Sigmoid colon (tissue), 7 donors: ENCODE measurements at regions of chr1 and their contacts with region 1.

Region 1: GRCh38 chr1:165914136-165914798 is 86.9 kb downstream of the UCK2 start:
- DNase-seq: peak; percentile 69
- H3K4me3 ChIP-seq: no peak overlapping the region
- H3K27ac ChIP-seq: no peak overlapping the region
- H3K4me1 ChIP-seq: peaks cover 0 to 6% (median 0%) of the 10 kb centered on the region in 4 donors
- H3K27me3 ChIP-seq: no peaks in the 10 kb centered on the region
- CTCF ChIP-seq: peak; percentile 78 to 89 (median 88)
- EP300 ChIP-seq: no peak
- POLR2A ChIP-seq: no peak

Region 2: GRCh38 chr1:165392634-165393571 is 521.4 kb before region 1 on chr1:
- intact Hi-C with region 1: loop called (anchors 5 kb)
- DNase-seq: peak; percentile 92
- H3K4me3 ChIP-seq: peak overlapping the region in 3 of 4 donors; percentile 5 to 24 (median 23)
- H3K27ac ChIP-seq: peak overlapping the region in 1 of 4 donors; percentile 47
- H3K4me1 ChIP-seq: peaks cover 0 to 8% (median 6%) of the 10 kb centered on the region in 4 donors
- H3K27me3 ChIP-seq: no peaks in the 10 kb centered on the region
- CTCF ChIP-seq: peak; percentile 66 to 95 (median 80)
- EP300 ChIP-seq: no peak
- POLR2A ChIP-seq: no peak

Region 3: GRCh38 chr1:165842671-165843129 is 71.6 kb before region 1 on chr1:
- intact Hi-C with region 1: no loop called
- DNase-seq: no peak
- H3K4me3 ChIP-seq: no peak overlapping the region
- H3K27ac ChIP-seq: no peak overlapping the region
- H3K4me1 ChIP-seq: peaks cover 0 to 18% (median 10%) of the 10 kb centered on the region in 4 donors
- H3K27me3 ChIP-seq: no peaks in the 10 kb centered on the region
- CTCF ChIP-seq: no peak
- EP300 ChIP-seq: no peak
- POLR2A ChIP-seq: no peak